ENCODE measurements at regions of chr15 and their contacts with region 1.

Region 1: DNA sequence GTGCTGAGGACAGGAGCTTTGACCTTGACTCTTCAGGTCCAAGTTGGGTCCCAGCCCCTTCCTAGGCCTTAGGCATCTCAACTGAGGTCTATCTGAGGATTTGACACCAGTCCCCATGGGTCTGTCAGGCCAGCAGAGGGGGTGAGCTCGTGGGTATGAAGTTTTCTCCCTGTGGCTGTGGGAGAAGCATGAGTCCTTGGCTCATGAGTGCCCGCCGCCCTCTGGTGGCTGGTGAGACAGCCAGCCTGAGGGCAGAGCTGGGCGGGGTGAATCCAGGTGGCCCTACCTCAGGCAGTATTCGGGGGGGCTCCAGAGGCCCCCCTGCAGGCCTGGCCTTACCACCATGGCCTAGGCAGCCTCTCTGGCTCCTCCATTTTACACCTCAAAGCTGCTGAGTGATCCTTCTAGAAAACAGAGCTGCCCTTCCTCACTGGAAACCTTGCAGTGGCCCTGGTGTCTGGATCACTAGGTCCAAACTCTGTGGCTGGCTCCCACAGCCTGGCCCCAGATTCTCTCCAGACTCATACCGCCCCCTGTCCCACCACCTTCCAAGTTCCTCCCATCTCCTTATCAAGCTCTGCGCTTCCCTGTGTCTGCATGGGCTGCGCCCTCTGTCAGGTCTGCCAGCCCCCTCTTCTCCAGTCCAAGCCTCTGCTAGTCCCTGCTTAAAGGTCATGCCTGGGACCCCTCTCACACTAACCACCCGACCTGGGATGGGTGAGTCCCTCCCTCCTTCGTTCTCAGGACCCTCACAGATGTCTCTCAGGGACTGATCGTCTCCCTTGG is 16.1 kb downstream of the SH2D7 start:
- DNase-seq: peak; percentile 86
- CTCF ChIP-seq: peak; percentile 97

Region 2: DNA sequence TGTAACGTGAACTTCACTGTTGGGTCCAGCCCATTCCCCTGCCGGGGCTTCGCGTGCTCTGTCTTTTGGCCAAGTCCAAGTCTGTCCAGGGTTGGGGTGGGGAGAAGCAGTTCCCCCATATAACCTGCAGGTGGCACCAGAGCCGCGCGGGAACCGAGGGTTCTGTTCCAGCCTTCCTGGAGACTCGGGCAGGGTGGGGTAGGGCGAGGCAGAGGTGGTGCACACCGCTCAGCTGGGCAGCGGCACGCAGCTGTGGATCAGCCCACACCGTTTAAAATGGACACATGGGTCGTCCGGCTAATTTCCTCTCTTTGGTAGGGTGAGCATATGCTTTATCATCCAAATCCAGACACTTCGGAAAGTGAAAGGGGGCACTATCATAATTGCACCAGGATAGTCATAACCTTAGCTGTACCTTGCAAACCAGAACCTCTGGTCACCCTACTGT is 149.0 kb before region 1 on chr15:
- in situ Hi-C with region 1: loop called (anchors 10 kb)
- DNase-seq: peak; percentile 84
- CTCF ChIP-seq: peak; percentile 97

Region 3: GRCh38 chr15:78000091-78000926 is 108.2 kb before region 1 on chr15:
- in situ Hi-C with region 1: loop called (anchors 10 kb)
- DNase-seq: peak; percentile 78
- CTCF ChIP-seq: peak; percentile 84

Region 4: GRCh38 chr15:78195735-78196201 is 87.3 kb after region 1 on chr15:
- in situ Hi-C with region 1: loop called (anchors 5 kb)
- DNase-seq: peak; percentile 88
- CTCF ChIP-seq: peak; percentile 85

Region 5: DNA sequence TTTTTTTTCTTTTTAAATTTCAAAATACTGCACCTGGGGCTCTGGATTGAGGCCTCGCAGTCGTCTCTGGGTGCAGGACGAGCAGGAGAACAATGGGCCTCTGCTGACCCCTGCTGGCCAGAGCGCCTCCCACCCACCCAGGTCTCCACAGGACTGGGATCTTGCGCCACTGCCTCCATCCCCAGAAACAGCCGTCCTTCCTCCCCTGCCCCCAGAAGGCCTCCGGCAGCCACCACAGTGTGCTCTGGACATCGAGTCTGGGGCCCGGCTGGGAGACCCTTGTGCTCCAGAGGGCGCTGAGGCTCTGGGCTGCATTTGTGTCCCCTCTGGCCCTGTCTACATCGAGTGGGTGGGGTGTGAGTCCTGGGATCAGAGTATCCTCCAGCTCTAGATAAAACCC is 132.5 kb after region 1 on chr15:
- in situ Hi-C with region 1: loop called (anchors 10 kb)
- DNase-seq: peak; percentile 91
- CTCF ChIP-seq: peak; percentile 84

Measured in GM13976 (cell line).